ENCODE measurements at regions of chr5 and their contacts with region 1.

Region 1: DNA sequence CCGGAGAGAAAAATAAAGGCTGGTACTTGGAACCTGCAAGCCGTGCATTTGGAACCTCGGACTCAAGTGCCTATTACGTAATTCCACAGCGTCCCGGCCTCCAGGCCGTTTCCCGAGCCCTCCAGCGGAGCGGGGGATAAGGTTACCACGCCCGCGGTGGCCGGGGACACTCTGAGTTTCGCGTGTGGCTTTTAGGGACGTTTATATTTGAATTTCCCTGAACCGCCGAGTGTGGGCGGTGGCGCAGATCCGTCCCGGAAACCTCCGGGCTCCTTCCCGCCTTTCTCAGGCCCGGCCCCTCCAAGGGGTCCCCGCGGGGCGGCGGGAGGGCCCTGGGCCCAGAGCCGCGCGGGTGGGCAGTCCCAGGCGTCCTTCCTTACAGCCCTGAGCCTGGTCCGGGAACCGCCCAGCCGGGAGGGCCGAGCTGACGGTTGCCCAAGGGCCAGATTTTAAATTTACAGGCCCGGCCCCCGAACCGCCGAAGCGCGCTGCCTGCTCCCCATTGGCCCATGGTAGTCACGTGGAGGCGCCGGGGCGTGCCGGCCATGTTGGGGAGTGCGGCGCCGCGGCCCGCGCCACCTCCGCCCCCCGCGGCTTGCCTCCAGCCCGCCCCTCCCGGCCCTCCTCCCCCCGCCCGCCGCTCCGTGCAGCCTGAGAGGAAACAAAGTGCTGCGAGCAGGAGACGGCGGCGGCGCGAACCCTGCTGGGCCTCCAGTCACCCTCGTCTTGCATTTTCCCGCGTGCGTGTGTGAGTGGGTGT is at the start of gene LMNB1:
- DNase-seq: peak; percentile 97
- H3K4me3 Mint-ChIP-seq: peak within 1 kb of the TSS; percentile 96
- H3K27ac Mint-ChIP-seq: peak within 1 kb of the TSS; percentile 97
- H3K4me1 Mint-ChIP-seq: peaks cover 26% of the 10 kb centered on the region
- H3K27me3 Mint-ChIP-seq: no peaks in the 10 kb centered on the region
- total RNA-seq, gene LMNB1: 274 to 289 TPM

Region 2: DNA sequence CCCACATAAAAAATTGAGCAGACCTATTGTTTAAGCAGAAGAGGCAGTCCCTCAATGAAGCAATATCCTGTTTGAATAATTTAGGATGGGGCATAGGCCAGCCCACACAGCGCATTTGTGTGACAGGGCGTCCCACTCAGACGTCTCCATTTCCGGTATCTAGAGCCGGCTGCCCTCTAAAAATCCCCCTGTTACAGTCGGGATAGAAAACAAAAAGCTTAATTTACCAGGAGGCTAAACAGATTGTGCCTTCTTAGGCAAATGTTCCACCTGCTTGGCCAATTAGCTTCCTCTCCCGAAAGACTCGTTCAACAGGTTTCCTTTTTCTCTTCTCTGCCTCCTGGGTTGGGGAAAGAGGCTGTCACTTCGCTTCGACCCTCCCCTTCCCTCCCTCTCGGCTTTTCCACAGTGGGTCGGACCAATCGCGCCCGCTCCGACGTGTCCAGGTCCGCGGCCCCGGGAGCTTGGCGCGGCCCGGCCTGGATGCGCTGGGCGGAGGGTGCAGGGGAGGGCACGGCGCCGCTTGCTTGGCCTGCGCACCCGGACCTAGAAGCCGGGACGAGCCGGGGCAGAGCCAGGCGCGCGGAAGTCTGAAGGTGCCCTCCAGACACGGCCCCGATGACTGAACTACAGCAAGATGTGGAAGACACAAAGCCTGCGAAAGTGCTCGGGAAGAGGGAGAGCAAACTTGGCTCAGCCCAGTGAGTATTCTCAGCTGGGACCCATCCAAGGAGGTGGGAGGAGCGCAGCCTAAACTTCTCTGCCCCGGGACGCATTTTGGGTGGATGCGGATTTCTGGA is 353.5 kb before region 1 on chr5 and contains the start of gene GRAMD2B:
- CTCF ChIA-PET with region 1: no interaction called
- intact Hi-C with region 1: loop called (anchors 1 kb)
- DNase-seq: peak; percentile 87
- H3K4me3 Mint-ChIP-seq: peak within 1 kb of the TSS; percentile 81
- H3K27ac Mint-ChIP-seq: peak within 1 kb of the TSS; percentile 88
- H3K4me1 Mint-ChIP-seq: peaks cover 29% of the 10 kb centered on the region
- H3K27me3 Mint-ChIP-seq: no peaks in the 10 kb centered on the region
- total RNA-seq, gene GRAMD2B: 8.7 to 10.8 TPM

Region 3: GRCh38 chr5:126656396-126657007 is 120.2 kb before region 1 on chr5:
- CTCF ChIA-PET with region 1: interaction called, 5 read pairs
- intact Hi-C with region 1: loop called (anchors 1 kb)
- DNase-seq: peak; percentile 48
- H3K4me3 Mint-ChIP-seq: no peak overlapping the region
- H3K27ac Mint-ChIP-seq: no peak overlapping the region
- H3K4me1 Mint-ChIP-seq: peaks cover 4% of the 10 kb centered on the region
- H3K27me3 Mint-ChIP-seq: no peaks in the 10 kb centered on the region

Region 4: DNA sequence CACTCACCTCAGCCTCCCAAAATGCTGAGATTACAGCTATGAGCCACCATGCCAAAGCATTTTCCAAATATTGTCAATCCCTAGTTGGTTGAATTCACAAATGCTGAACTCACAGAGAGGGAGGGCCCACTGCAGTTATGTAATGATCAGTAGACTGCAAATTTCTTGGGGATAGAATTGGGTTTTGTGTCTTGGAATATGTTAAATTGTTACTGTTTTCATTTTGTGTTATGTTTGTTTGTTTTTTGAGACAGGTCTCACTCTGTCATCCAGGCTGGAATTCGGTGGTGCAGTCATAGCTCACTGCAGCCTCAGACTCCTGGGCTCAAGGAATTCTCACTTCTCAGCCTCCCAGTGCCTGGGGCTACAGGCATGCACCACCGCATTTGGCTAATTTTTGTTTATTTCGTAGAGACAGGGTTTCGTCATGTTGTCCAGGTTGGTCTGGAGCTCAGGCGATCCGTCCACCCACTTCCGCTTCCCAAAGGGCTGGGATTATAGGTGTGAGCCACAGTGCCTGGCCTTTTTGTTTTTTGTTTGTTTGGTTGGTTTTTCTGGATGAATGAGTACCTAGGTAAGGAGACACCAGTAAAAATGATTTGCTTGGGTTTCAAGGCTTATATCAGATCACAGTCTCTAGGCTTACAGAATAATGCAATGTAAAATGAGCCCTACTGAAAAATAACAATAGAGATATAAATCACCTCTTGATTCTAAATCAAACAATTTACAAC is 31.3 kb before region 1 on chr5:
- CTCF ChIA-PET with region 1: interaction called, 8 read pairs
- intact Hi-C with region 1: loop called (anchors 1 kb)
- DNase-seq: no peak
- H3K4me3 Mint-ChIP-seq: no peak overlapping the region
- H3K27ac Mint-ChIP-seq: peak overlapping the region; percentile 24
- H3K4me1 Mint-ChIP-seq: peaks cover 41% of the 10 kb centered on the region
- H3K27me3 Mint-ChIP-seq: no peaks in the 10 kb centered on the region

Region 5: GRCh38 chr5:126852091-126852571 is 75.5 kb after region 1 on chr5:
- CTCF ChIA-PET with region 1: no interaction called
- intact Hi-C with region 1: loop called (anchors 2 kb)
- DNase-seq: peak; percentile 24
- H3K4me3 Mint-ChIP-seq: no peak overlapping the region
- H3K27ac Mint-ChIP-seq: peak overlapping the region; percentile 81
- H3K4me1 Mint-ChIP-seq: peaks cover 50% of the 10 kb centered on the region
- H3K27me3 Mint-ChIP-seq: no peaks in the 10 kb centered on the region

Region 6: DNA sequence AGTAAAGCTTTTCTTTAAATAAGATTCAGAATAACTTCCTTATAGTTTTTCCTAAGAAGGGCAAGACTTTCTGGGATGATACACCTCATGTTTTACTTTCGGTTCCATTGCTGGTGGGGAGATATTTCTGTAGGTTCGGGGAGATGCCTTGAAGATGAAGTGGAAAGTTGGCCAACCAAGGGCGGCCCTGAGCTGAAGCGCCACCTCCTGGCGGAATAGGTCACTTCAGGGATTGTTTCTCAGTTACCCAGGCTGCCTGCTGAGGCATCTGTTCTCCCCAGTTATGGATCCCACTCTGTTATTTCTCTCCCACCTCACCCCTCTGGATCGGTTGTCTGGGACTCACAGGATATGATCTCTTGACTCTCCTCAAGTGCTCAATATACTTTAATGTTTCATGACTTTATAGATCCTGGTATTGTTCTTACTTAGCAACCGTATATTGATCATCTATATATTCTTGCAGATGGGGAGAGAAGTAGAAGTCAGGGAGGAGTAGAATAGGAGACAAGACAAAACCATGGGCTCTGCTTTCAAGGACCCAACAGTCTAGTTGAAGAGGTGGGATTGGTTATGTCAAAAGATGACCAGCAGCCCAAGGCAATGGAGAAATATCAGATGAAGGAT is 537.3 kb after region 1 on chr5:
- CTCF ChIA-PET with region 1: no interaction called
- intact Hi-C with region 1: loop called (anchors 2 kb)
- DNase-seq: peak; percentile 81
- H3K4me3 Mint-ChIP-seq: no peak overlapping the region
- H3K27ac Mint-ChIP-seq: no peak overlapping the region
- H3K4me1 Mint-ChIP-seq: peaks cover 4% of the 10 kb centered on the region
- H3K27me3 Mint-ChIP-seq: peaks cover under 1% of the 10 kb centered on the region